Common myeloid progenitor, CD34-positive (primary cell): ENCODE measurements at regions of chr12 and their contacts with region 1.

Region 1: DNA sequence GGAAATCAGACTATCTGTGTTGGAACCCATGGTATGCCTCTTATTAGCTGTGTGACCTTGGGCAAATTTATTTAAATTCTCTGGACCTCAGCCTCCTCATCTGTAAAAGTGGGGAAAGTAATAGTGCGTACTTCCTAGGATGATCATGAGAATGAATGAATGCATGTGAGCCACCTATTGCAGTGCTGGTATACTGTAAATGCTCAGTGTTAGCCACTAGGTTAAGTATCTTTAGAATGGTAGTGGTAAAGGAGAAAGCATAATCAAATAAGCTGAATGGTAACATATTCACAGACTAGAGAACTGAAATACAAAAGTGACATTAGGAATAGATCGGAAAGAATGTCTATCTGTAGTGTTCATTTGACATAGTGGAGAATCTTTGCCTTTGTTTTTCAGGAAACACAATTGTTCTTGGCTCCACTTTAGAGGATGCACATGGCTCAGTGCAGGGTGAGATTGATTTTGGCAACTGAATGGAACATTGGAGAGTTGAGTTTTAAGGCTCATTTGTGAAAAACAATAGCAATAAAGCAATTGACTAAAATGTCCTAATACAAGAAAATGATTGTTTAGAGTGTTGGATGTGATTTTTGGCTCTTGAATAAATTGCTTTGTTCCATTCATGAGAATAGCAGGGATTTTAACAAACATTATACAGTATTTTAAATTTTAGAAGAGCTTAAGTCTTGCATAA is 116.5 kb downstream of the SLC38A1 start:
- DNase-seq: no peak
- H3K4me3 ChIP-seq: no peak overlapping the region
- H3K27ac ChIP-seq: no peak overlapping the region
- H3K4me1 ChIP-seq: peaks cover 0 to 9% (median 0%) of the 10 kb centered on the region in 4 experiments
- H3K27me3 ChIP-seq: no peaks in the 10 kb centered on the region

Region 2: DNA sequence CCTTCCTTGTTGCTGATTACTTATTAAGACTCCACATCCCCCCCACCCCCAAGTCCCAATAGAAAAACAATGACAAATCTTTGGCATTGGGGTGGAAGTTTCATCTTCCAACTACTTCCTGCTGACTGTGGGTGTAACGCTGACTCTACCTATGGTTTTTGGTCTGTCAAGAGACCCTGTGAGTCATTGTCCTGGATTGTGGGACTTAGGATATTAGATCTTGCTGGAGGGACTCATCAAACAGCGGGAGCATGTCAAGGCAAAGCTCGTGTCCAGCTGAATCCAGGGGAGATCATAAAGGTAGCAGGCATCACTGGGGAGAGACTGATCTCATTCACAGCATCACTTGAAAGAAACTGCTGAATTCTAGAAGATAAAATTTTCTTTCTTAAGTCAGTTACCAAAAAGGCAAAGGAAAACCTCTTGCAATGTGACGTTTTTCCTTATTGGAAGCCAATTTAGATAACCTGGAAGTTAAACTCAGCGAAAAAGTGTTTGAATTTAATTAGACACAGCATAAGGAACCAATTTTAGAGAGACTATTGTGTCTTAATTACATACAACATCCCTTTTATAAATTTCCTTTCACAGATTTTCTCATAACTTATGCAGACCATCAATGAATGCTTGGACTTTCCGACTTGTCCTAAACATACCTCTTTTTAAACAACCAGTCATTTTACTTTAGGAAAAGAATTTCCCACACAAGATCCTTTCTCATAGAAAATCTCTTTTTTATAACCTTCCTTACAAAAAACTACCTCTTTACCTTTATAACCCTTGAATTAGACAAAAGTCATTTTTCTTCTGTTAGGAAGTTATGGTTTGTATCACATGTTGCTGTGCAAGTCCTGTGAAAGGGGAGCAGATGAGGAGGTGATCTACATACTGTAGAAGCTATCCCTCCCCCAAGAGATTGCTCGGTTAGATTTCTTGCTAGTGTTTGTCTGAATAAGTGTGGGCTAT is 67.4 kb before region 1 on chr12:
- CTCF ChIA-PET with region 1: no interaction called
- POLR2A ChIA-PET with region 1: no interaction called
- DNase-seq: no peak
- H3K4me3 ChIP-seq: no peak overlapping the region
- H3K27ac ChIP-seq: no peak overlapping the region
- H3K4me1 ChIP-seq: no peaks in the 10 kb centered on the region
- H3K27me3 ChIP-seq: no peaks in the 10 kb centered on the region

Region 3: GRCh38 chr12:46187023-46187422 is 34.7 kb after region 1 on chr12:
- CTCF ChIA-PET with region 1: no interaction called
- POLR2A ChIA-PET with region 1: no interaction called
- DNase-seq: no peak
- H3K4me3 ChIP-seq: no peak overlapping the region
- H3K27ac ChIP-seq: no peak overlapping the region
- H3K4me1 ChIP-seq: no peaks in the 10 kb centered on the region
- H3K27me3 ChIP-seq: no peaks in the 10 kb centered on the region

Region 4: GRCh38 chr12:46303039-46303666 is 150.8 kb after region 1 on chr12:
- CTCF ChIA-PET with region 1: interaction called, 10 read pairs
- POLR2A ChIA-PET with region 1: no interaction called
- DNase-seq: peak; percentile 56 to 70 (median 69)
- H3K4me3 ChIP-seq: no peak overlapping the region
- H3K27ac ChIP-seq: no peak overlapping the region
- H3K4me1 ChIP-seq: peaks cover 0 to 10% (median 6%) of the 10 kb centered on the region in 4 experiments
- H3K27me3 ChIP-seq: no peaks in the 10 kb centered on the region